IMR-90 (cell line): ENCODE measurements at regions of chr2 and their contacts with region 1.

Region 1: DNA sequence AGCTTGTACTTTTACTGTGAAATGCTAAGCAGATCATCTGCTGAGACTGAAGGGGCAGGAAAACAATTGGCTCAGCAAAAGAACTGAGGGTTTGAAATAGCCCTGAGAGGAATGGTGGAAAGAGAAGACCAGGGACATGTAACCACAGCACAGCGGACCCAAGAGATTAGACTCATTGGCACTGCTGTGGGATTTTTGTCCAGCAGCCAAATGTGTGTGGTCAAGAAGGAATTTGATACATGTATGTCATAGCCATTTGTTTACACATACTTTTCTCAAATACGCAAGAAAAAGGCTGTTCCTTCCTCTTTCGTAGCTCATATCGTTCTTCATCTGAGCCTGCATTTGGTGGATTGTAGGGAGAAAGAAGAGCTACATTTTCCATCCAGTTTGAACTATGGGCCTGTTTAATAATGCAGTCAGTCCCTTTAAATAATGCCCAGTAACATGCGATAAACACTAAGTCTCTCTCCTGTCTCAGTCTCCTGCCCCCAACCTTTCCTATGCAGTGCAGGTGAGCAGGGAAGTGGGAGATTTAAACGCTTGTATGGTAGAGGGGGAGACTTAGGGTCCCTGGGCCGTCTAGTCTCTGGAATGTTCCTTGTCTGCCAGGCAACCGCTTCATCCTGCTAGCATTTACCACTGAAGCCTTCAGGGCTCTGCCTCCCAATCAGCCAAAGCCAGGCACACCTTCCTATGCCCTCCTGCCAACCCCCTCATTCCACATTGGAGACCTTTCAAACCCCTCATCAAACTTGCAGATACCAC is 73.6 kb downstream of the TRABD2A start:
- DNase-seq: peak; percentile 100
- ATAC-seq: peak; percentile 87
- H3K4me3 ChIP-seq: no peak overlapping the region
- H3K27ac ChIP-seq: peak overlapping the region; percentile 97
- H3K4me1 ChIP-seq: peaks cover 11% of the 10 kb centered on the region
- H3K27me3 ChIP-seq: no peaks in the 10 kb centered on the region
- CTCF ChIP-seq: no peak
- POLR2A ChIP-seq: peak; percentile 76
- RAD21 ChIP-seq: no peak

Region 2: GRCh38 chr2:84022810-84023431 is 784.3 kb before region 1 on chr2:
- CTCF ChIA-PET with region 1: no interaction called
- POLR2A ChIA-PET with region 1: no interaction called
- dilution Hi-C with region 1: no loop called
- in situ Hi-C with region 1: no loop called
- intact Hi-C with region 1: no loop called
- DNase-seq: peak; percentile 60
- ATAC-seq: peak; percentile 77
- H3K4me3 ChIP-seq: no peak overlapping the region
- H3K27ac ChIP-seq: no peak overlapping the region
- H3K4me1 ChIP-seq: no peaks in the 10 kb centered on the region
- H3K27me3 ChIP-seq: no peaks in the 10 kb centered on the region
- CTCF ChIP-seq: peak; percentile 62
- POLR2A ChIP-seq: no peak
- RAD21 ChIP-seq: peak; percentile 54

Region 3: DNA sequence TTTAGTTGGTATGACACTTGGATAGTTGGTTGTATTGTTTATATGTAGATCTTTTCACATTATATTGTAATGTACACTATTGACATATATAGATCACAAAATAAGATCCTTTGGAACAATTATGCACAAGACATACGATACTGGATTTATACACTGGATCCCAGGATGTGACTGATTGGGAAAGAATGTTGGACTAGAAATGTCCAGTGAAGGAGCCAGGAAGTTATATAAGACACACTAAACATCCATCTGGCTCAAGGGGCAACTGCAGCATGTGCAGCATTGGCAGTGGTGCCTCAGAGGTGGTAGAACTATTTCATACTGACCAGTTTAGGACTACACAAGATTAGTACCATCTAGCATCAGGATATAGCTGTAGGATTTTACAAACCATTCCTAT is 31.2 kb before region 1 on chr2:
- CTCF ChIA-PET with region 1: interaction called, 3 read pairs
- POLR2A ChIA-PET with region 1: no interaction called
- dilution Hi-C with region 1: no loop called
- in situ Hi-C with region 1: no loop called
- intact Hi-C with region 1: loop called (anchors 2 kb)
- DNase-seq: peak; percentile 26
- ATAC-seq: no peak
- H3K4me3 ChIP-seq: no peak overlapping the region
- H3K27ac ChIP-seq: no peak overlapping the region
- H3K4me1 ChIP-seq: peaks cover 2% of the 10 kb centered on the region; the same call in 1 of the 2 replicates
- H3K27me3 ChIP-seq: no peaks in the 10 kb centered on the region
- CTCF ChIP-seq: no peak
- POLR2A ChIP-seq: no peak
- RAD21 ChIP-seq: no peak

Region 4: GRCh38 chr2:84838434-84839145 is 31.3 kb after region 1 on chr2:
- CTCF ChIA-PET with region 1: no interaction called
- POLR2A ChIA-PET with region 1: interaction called, 7 read pairs
- dilution Hi-C with region 1: no loop called
- in situ Hi-C with region 1: no loop called
- intact Hi-C with region 1: loop called (anchors 2 kb)
- DNase-seq: peak; percentile 93
- ATAC-seq: peak; percentile 80
- H3K4me3 ChIP-seq: no peak overlapping the region
- H3K27ac ChIP-seq: peak overlapping the region; percentile 97
- H3K4me1 ChIP-seq: peaks cover 16% of the 10 kb centered on the region
- H3K27me3 ChIP-seq: no peaks in the 10 kb centered on the region
- CTCF ChIP-seq: no peak
- POLR2A ChIP-seq: no peak
- RAD21 ChIP-seq: no peak